ENCODE measurements at regions of chr6 and their contacts with region 1.

Region 1: GRCh38 chr6:37791156-37791919 is 28.2 kb upstream of the ZFAND3 start:
- DNase-seq: peak; percentile 94
- ATAC-seq: peak; percentile 100
- H3K4me3 Mint-ChIP-seq: no peak overlapping the region
- H3K27ac Mint-ChIP-seq: no peak overlapping the region
- H3K4me1 Mint-ChIP-seq: peaks cover 10% of the 10 kb centered on the region
- H3K27me3 Mint-ChIP-seq: no peaks in the 10 kb centered on the region

Region 2: DNA sequence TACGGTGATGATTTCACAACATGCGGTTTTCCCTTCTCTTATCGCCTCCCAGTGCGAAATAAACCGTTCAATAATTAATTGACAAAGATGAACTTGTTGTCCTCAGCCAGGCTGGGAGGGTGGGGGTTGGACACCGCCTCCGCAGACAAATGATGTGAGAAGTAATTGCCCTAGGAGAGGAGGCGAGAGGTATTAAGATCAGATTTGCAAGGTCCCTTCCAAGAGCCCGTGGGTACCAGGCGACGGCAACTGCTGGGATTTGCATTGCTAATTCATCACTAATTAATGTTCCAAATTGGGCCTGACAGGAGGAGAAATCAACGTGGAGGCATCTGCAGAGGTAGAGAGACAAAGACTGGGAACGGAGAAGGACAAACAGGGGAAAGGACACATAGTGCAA is 201.4 kb before region 1 on chr6:
- CTCF ChIA-PET with region 1: no interaction called
- POLR2A ChIA-PET with region 1: no interaction called
- intact Hi-C with region 1: no loop called
- DNase-seq: no peak
- ATAC-seq: no peak
- H3K4me3 Mint-ChIP-seq: no peak overlapping the region
- H3K27ac Mint-ChIP-seq: no peak overlapping the region
- H3K4me1 Mint-ChIP-seq: no peaks in the 10 kb centered on the region
- H3K27me3 Mint-ChIP-seq: no peaks in the 10 kb centered on the region

Region 3: GRCh38 chr6:37653933-37654565 is 137.3 kb before region 1 on chr6:
- CTCF ChIA-PET with region 1: no interaction called
- POLR2A ChIA-PET with region 1: no interaction called
- intact Hi-C with region 1: no loop called
- DNase-seq: peak; percentile 77
- ATAC-seq: peak; percentile 71
- H3K4me3 Mint-ChIP-seq: no peak overlapping the region
- H3K27ac Mint-ChIP-seq: no peak overlapping the region
- H3K4me1 Mint-ChIP-seq: peaks cover 11% of the 10 kb centered on the region
- H3K27me3 Mint-ChIP-seq: peaks cover 13% of the 10 kb centered on the region

Region 4: DNA sequence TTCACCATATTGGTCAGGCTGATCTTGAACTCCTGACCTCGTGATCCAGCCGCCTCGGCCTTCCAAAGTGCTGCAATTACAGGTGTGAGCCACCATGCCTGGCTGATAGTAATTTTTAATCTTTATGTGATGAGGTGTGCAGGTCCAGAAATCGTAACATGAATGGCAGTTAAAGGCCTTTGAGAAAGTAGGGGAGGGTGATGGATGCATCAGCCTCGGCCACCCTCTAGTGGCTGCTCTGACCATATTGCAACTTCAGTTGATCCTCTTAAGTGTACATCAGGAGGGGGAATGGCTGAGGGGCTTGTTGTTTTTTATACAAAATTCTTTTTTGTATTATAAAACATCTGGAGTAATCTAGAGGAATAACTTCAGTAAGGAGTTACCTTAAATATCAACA is 221.2 kb after region 1 on chr6:
- CTCF ChIA-PET with region 1: no interaction called
- POLR2A ChIA-PET with region 1: no interaction called
- intact Hi-C with region 1: loop called in 1 of 2 experiments (anchors 1 kb)
- DNase-seq: peak; percentile 36
- ATAC-seq: peak; percentile 63
- H3K4me3 Mint-ChIP-seq: no peak overlapping the region
- H3K27ac Mint-ChIP-seq: no peak overlapping the region
- H3K4me1 Mint-ChIP-seq: peaks cover 14% of the 10 kb centered on the region
- H3K27me3 Mint-ChIP-seq: no peaks in the 10 kb centered on the region